Mammary epithelial cell (primary cell): ENCODE measurements at regions of chr6 and their contacts with region 1.

Region 1: DNA sequence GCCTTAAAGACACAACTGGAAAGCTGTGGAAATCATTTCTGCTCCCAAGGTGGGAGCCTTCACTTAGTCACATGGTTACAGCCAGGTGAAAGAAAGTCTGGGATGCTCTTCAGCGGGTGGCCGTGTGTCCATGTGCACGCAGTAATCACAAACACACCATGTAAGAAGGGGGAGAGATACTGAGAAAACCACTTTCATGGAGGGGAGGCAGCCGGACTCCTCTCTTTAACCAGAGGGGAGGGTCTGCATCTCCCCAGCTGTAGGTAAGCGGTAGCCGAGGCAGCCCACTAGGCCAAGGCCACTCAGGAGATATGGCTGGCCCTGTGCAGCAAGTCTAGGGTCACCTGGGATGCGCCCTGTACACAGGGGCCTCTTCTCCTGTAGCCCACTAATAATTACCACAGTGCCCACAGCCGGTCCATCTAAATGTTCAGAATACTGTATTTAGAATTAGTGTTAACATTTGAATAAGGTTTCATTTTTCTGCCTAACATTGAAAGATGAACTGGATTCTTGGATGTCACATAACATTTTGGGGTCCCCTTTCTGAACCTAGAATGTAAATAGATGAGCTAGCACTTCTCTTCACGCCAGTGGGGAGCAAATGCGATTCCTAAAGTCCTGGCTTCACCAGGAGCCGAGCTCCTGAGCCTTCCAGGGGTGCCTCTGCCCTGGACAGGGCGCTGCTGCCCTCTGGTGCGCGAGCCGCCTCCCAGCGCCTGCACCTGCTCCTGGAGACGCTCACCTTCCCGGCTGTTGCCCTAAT is 15.9 kb downstream of the GPR31 start:
- DNase-seq: peak; percentile 20
- H3K4me3 ChIP-seq: no peak overlapping the region
- H3K27ac ChIP-seq: no peak overlapping the region
- H3K4me1 ChIP-seq: no peaks in the 10 kb centered on the region
- H3K27me3 ChIP-seq: no peaks in the 10 kb centered on the region
- CTCF ChIP-seq: peak; percentile 46 to 79

Region 2: GRCh38 chr6:166786704-166787293 is 355.1 kb before region 1 on chr6:
- CTCF ChIA-PET with region 1: no interaction called
- dilution Hi-C with region 1: no loop called
- in situ Hi-C with region 1: loop called in 1 of 2 experiments (anchors 25 kb)
- intact Hi-C with region 1: loop called (anchors 1 kb)
- DNase-seq: peak; percentile 38
- H3K4me3 ChIP-seq: no peak overlapping the region
- H3K27ac ChIP-seq: no peak overlapping the region
- H3K4me1 ChIP-seq: no peaks in the 10 kb centered on the region
- H3K27me3 ChIP-seq: no peaks in the 10 kb centered on the region
- CTCF ChIP-seq: peak; percentile 57 to 71

Region 3: GRCh38 chr6:166999145-166999883 is 142.5 kb before region 1 on chr6 and contains the start of gene CEP43:
- CTCF ChIA-PET with region 1: no interaction called
- dilution Hi-C with region 1: no loop called
- in situ Hi-C with region 1: no loop called
- intact Hi-C with region 1: loop called (anchors 1 kb)
- DNase-seq: peak; percentile 94
- H3K4me3 ChIP-seq: peak within 1 kb of the TSS; percentile 88 to 98 (median 91)
- H3K27ac ChIP-seq: peak within 1 kb of the TSS; percentile 76
- H3K4me1 ChIP-seq: peaks cover 14% of the 10 kb centered on the region
- H3K27me3 ChIP-seq: no peaks in the 10 kb centered on the region
- CTCF ChIP-seq: no peak
- total RNA-seq, gene CEP43: 16.3 to 17.3 TPM

Region 4: GRCh38 chr6:167077241-167077932 is 64.5 kb before region 1 on chr6:
- CTCF ChIA-PET with region 1: no interaction called
- dilution Hi-C with region 1: no loop called
- in situ Hi-C with region 1: no loop called
- intact Hi-C with region 1: no loop called
- DNase-seq: no peak
- H3K4me3 ChIP-seq: no peak overlapping the region
- H3K27ac ChIP-seq: no peak overlapping the region
- H3K4me1 ChIP-seq: no peaks in the 10 kb centered on the region
- H3K27me3 ChIP-seq: no peaks in the 10 kb centered on the region
- CTCF ChIP-seq: no peak